Tibial artery (tissue), 4 donors: ENCODE measurements at regions of chr5 and their contacts with region 1.

Region 1: GRCh38 chr5:31781772-31782171 is 142.8 kb downstream of the PDZD2 start:
- DNase-seq: no peak
- H3K4me3 ChIP-seq: no peak overlapping the region
- H3K27ac ChIP-seq: no peak overlapping the region
- H3K4me1 ChIP-seq: peaks cover 0 to 7% (median 3%) of the 10 kb centered on the region in 4 donors
- H3K27me3 ChIP-seq: no peaks in the 10 kb centered on the region
- CTCF ChIP-seq: no peak

Region 2: GRCh38 chr5:31656806-31657205 is 125.0 kb before region 1 on chr5:
- intact Hi-C with region 1: no loop called
- DNase-seq: no peak
- H3K4me3 ChIP-seq: no peak overlapping the region
- H3K27ac ChIP-seq: no peak overlapping the region
- H3K4me1 ChIP-seq: no peaks in the 10 kb centered on the region
- H3K27me3 ChIP-seq: no peaks in the 10 kb centered on the region
- CTCF ChIP-seq: no peak

Region 3: GRCh38 chr5:31738199-31738598 is 43.6 kb before region 1 on chr5:
- intact Hi-C with region 1: loop called (anchors 2 kb)
- DNase-seq: no peak
- H3K4me3 ChIP-seq: no peak overlapping the region
- H3K27ac ChIP-seq: no peak overlapping the region
- H3K4me1 ChIP-seq: peaks cover 0 to 34% (median 11%) of the 10 kb centered on the region in 4 donors
- H3K27me3 ChIP-seq: no peaks in the 10 kb centered on the region
- CTCF ChIP-seq: no peak